ENCODE measurements at regions of chr4 and their contacts with region 1.

Region 1: GRCh38 chr4:99462875-99463464 is 27.8 kb upstream of the ADH7 start:
- DNase-seq: peak; percentile 36 to 52 (median 44)
- H3K4me3 ChIP-seq: no peak overlapping the region
- H3K4me3 Mint-ChIP-seq: no peak overlapping the region
- H3K27ac ChIP-seq: no peak overlapping the region
- H3K27ac Mint-ChIP-seq: peak overlapping the region in 1 of 7 donors; percentile 10
- H3K4me1 ChIP-seq: no peaks in the 10 kb centered on the region
- H3K4me1 Mint-ChIP-seq: no peaks in the 10 kb centered on the region
- H3K27me3 ChIP-seq: no peaks in the 10 kb centered on the region
- H3K27me3 Mint-ChIP-seq: peaks cover 13 to 18% of the 10 kb centered on the region in 2 donors

Region 2: DNA sequence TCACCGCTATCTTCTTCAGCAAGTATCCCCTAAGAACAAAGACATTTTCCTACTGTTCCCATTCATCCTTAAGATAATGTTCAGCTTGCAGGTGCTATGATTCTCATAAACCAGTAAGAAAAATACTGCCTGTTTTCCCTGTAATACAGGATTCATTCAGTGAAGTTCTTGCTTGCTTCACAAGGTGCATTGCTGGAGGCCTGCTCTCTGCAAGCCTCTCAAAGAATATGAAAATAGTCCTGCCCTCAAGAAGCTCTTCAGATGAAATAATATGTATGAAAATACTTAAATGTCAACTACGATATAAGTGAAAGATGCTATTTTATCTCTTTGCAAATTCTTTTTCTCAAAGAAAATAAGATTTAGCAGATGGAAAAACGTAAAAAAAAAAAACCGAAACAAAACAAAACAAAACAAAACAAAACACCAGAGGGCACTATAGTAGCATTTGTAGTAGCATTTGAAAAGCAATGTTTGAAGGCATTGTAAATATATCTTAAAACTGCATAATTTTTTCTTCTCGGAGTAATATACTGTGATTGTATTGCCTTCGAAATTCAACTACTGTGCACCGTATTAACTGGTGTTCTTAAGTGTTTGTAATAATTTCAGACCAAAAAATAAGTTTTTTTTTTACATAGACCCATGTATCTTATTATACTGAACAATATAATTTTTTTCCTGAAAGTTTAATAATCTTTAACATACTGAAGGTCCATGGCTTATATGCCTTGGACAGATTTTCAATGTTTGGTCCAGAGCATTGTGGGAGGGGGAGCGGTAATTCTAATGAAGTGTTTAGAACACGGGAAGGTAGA is 344.9 kb before region 1 on chr4:
- CTCF ChIA-PET with region 1: interaction called, 5 read pairs
- POLR2A ChIA-PET with region 1: interaction called, 3 read pairs
- intact Hi-C with region 1: loop called (anchors 1 kb)
- DNase-seq: peak in 2 of 5 donors; percentile 4 to 7
- H3K4me3 ChIP-seq: no peak overlapping the region
- H3K4me3 Mint-ChIP-seq: no peak overlapping the region
- H3K27ac ChIP-seq: no peak overlapping the region
- H3K27ac Mint-ChIP-seq: no peak overlapping the region
- H3K4me1 ChIP-seq: no peaks in the 10 kb centered on the region
- H3K4me1 Mint-ChIP-seq: no peaks in the 10 kb centered on the region
- H3K27me3 ChIP-seq: no peaks in the 10 kb centered on the region
- H3K27me3 Mint-ChIP-seq: peaks cover 0 to 1% of the 10 kb centered on the region in 2 donors

Region 3: GRCh38 chr4:99447079-99447478 is 15.9 kb before region 1 on chr4:
- CTCF ChIA-PET with region 1: interaction called, 10 read pairs
- POLR2A ChIA-PET with region 1: no interaction called
- intact Hi-C with region 1: no loop called
- DNase-seq: no peak
- H3K4me3 ChIP-seq: no peak overlapping the region
- H3K4me3 Mint-ChIP-seq: no peak overlapping the region
- H3K27ac ChIP-seq: no peak overlapping the region
- H3K27ac Mint-ChIP-seq: no peak overlapping the region
- H3K4me1 ChIP-seq: no peaks in the 10 kb centered on the region
- H3K4me1 Mint-ChIP-seq: no peaks in the 10 kb centered on the region
- H3K27me3 ChIP-seq: no peaks in the 10 kb centered on the region
- H3K27me3 Mint-ChIP-seq: peaks cover 5% of the 10 kb centered on the region in 2 donors

Region 4: GRCh38 chr4:99473131-99473530 is 10.2 kb after region 1 on chr4:
- CTCF ChIA-PET with region 1: interaction called, 18 read pairs
- POLR2A ChIA-PET with region 1: interaction called, 3 read pairs
- intact Hi-C with region 1: no loop called
- DNase-seq: no peak
- H3K4me3 ChIP-seq: no peak overlapping the region
- H3K4me3 Mint-ChIP-seq: no peak overlapping the region
- H3K27ac ChIP-seq: no peak overlapping the region
- H3K27ac Mint-ChIP-seq: no peak overlapping the region
- H3K4me1 ChIP-seq: no peaks in the 10 kb centered on the region
- H3K4me1 Mint-ChIP-seq: no peaks in the 10 kb centered on the region
- H3K27me3 ChIP-seq: no peaks in the 10 kb centered on the region
- H3K27me3 Mint-ChIP-seq: peaks cover 3 to 6% of the 10 kb centered on the region in 2 donors

Measured in CD4-positive, alpha-beta memory T cell (primary cell).